H1 (cell line): ENCODE measurements at regions of chr12 and their contacts with region 1.

Region 1: GRCh38 chr12:47021298-47021697 is 58.1 kb upstream of the PCED1B start:
- DNase-seq: no peak
- H3K4me3 ChIP-seq: no peak overlapping the region
- H3K27ac ChIP-seq: no peak overlapping the region
- H3K4me1 ChIP-seq: no peaks in the 10 kb centered on the region
- H3K27me3 ChIP-seq: no peaks in the 10 kb centered on the region
- CTCF ChIP-seq: peak in 2 of 3 experiments; percentile 31 to 67; a peak in 2 of 4 replicates
- EP300 ChIP-seq: no peak
- POLR2A ChIP-seq: no peak
- RAD21 ChIP-seq: peak; percentile 77 to 81

Region 2: DNA sequence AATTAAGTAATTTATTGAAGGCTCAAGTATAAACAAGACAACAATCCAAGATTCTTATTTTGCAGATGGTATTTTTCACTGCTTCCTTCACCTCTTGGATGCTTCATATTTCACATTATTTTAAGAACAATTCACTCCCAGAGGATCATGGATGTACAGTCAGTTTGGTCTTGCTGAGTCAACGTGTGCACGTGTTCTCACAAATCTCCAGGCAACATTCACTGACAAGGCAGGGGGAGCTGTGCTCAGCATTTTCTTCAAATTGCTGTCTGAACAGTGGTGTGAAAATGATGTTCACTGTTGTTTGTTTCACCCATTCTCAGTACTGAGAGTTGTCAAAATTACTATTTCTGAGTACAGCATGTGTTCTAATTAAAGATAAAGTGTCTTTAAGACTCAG is 77.2 kb before region 1 on chr12:
- CTCF ChIA-PET with region 1: interaction called, 12 read pairs
- POLR2A ChIA-PET with region 1: no interaction called
- DNase-seq: no peak
- H3K4me3 ChIP-seq: no peak overlapping the region
- H3K27ac ChIP-seq: no peak overlapping the region
- H3K4me1 ChIP-seq: no peaks in the 10 kb centered on the region
- H3K27me3 ChIP-seq: no peaks in the 10 kb centered on the region
- CTCF ChIP-seq: peak in 1 of 3 experiments; percentile 10; a peak in 1 of 4 replicates
- EP300 ChIP-seq: no peak
- POLR2A ChIP-seq: no peak
- RAD21 ChIP-seq: peak in 1 of 2 experiments; percentile 10; a peak in 1 of 4 replicates

Region 3: DNA sequence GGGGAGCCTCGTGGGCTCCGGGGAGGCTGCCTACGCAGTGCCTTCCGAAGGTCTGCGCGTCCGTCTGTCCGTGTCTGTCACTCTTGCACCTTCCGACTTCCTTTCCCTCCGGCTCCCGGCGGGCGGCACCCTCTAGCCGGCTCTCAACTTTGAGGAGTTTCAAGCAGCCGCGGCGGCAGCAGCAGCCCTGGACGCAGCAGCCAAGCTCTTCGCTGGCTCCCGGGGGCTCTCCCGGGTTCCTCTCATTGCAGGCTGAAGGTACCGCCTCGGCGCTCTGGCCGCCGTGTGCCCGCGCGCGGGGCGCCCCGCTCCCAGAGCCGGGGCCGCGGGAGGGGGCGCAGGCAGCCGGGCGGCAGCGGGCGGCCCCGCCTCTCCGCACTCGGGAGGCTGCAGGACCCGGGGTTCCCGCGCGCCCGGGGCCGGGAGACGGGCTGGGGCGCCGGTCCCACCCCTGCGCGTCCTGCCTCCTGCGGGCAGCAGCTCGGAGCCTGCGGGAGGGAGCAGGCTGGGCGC is 58.2 kb after region 1 on chr12 and contains the starts of genes AMIGO2 and PCED1B:
- CTCF ChIA-PET with region 1: no interaction called
- POLR2A ChIA-PET with region 1: no interaction called
- DNase-seq: peak in 1 of 2 experiments; percentile 67
- H3K4me3 ChIP-seq: peak within 1 kb of the TSS; percentile 47 to 80 (median 67)
- H3K27ac ChIP-seq: no peak within 1 kb of the TSS
- H3K4me1 ChIP-seq: peaks cover 0 to 7% (median 1%) of the 10 kb centered on the region in 4 experiments; a peak in 2 of 7 replicates
- H3K27me3 ChIP-seq: peaks cover 0 to 23% (median 10%) of the 10 kb centered on the region in 4 experiments; a peak in 6 of 7 replicates
- CTCF ChIP-seq: peak; percentile 21 to 44 (median 41)
- EP300 ChIP-seq: no peak
- POLR2A ChIP-seq: no peak
- RAD21 ChIP-seq: peak; percentile 60 to 74
- total RNA-seq, gene AMIGO2: 3.3 TPM in 2 replicates
- total RNA-seq, gene PCED1B: 4.7 and 4.9 TPM in 2 replicates